GM23248 (cell line): ENCODE measurements at regions of chr4 and their contacts with region 1.

Region 1: GRCh38 chr4:107037199-107037584 is 1.1 kb upstream of the DKK2 start:
- DNase-seq: peak; percentile 73
- H3K4me3 ChIP-seq: peak overlapping the region; percentile 77
- H3K27ac ChIP-seq: no peak overlapping the region
- H3K4me1 ChIP-seq: 0 out of 2 replicates have a peak, but pooled peaks cover 17% of the 10 kb centered on the region
- H3K27me3 ChIP-seq: peaks cover 29% of the 10 kb centered on the region

Region 2: DNA sequence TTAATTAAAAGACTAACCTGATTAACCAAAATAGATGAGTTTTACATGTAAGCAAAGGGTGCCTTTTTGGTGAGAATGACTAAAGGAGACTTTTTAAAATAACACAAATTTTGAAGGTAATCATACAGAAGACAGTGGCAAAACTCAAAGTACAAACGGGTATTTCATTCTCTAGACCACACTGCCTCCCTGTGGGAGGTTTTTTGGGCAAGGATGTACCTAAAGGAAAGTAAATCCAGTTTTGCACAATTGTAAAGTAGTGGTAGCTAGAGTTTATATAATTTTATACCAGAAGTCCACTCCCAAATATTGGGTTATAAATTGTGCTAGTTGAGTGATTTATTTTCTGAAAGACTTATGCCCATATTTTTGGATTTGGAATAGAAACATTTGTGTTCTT is 481.9 kb after region 1 on chr4:
- in situ Hi-C with region 1: loop called (anchors 25 kb)
- DNase-seq: peak; percentile 50
- H3K4me3 ChIP-seq: no peak overlapping the region
- H3K27ac ChIP-seq: no peak overlapping the region
- H3K4me1 ChIP-seq: no peaks in the 10 kb centered on the region
- H3K27me3 ChIP-seq: no peaks in the 10 kb centered on the region

Region 3: GRCh38 chr4:107666134-107666533 is 628.9 kb after region 1 on chr4:
- in situ Hi-C with region 1: loop called (anchors 25 kb)
- DNase-seq: peak; percentile 65
- H3K4me3 ChIP-seq: no peak overlapping the region
- H3K27ac ChIP-seq: no peak overlapping the region
- H3K4me1 ChIP-seq: peaks cover 20% of the 10 kb centered on the region
- H3K27me3 ChIP-seq: no peaks in the 10 kb centered on the region